HCT116 (cell line): ENCODE measurements at regions of chr7 and their contacts with region 1.

Region 1: GRCh38 chr7:88700725-88701124 is 58.8 kb upstream of the ZNF804B start:
- DNase-seq: no peak
- ATAC-seq: no peak
- H3K4me3 ChIP-seq: no peak overlapping the region
- H3K27ac ChIP-seq: no peak overlapping the region
- H3K4me1 ChIP-seq: no peaks in the 10 kb centered on the region
- H3K27me3 ChIP-seq: no peaks in the 10 kb centered on the region
- CTCF ChIP-seq: no peak
- POLR2A ChIP-seq: no peak
- RAD21 ChIP-seq: no peak

Region 2: DNA sequence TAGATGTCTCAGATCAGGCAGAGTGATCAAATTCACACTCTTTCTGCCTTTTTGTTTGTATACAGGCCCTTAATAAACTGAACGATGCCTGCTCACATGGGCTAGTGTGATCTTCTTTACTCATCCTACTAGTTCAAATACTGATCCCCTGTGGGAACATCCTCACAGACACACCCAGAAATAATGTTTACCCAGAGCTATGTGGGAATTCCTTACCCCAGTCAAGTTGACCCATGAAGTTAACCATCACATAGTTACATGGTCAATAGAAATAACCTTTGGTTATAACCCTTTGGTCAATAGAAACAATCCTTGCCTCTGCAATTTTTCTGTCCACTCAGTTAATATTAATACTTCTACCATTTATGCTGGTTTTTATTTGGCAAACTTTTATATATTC is 25.0 kb after region 1 on chr7:
- CTCF ChIA-PET with region 1: no interaction called
- POLR2A ChIA-PET with region 1: no interaction called
- RAD21 ChIA-PET with region 1: no interaction called
- intact Hi-C with region 1: loop called (anchors 1 kb)
- DNase-seq: no peak
- ATAC-seq: no peak
- H3K4me3 ChIP-seq: no peak overlapping the region
- H3K27ac ChIP-seq: no peak overlapping the region
- H3K4me1 ChIP-seq: no peaks in the 10 kb centered on the region
- H3K27me3 ChIP-seq: no peaks in the 10 kb centered on the region
- CTCF ChIP-seq: no peak
- POLR2A ChIP-seq: no peak
- RAD21 ChIP-seq: no peak

Region 3: DNA sequence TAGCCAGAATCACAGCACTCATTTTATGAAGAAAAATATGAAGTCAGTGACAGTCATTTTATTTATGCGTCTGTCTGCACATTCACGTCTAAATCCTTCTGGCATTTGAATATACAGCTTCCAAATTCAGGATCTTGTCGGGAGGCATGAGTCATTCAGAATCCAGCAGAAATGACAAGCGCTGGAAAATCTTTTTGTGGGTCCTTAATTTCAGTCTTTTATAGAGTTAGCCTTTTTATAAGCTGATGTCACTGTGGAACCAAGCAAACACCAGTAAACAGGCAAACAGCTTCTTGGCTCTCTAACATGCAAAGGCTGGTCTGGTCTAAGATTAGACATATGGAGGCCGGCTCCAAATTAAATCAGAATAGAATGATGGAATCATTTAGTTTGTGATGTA is 483.0 kb after region 1 on chr7:
- CTCF ChIA-PET with region 1: no interaction called
- POLR2A ChIA-PET with region 1: no interaction called
- RAD21 ChIA-PET with region 1: no interaction called
- intact Hi-C with region 1: no loop called
- DNase-seq: no peak
- ATAC-seq: no peak
- H3K4me3 ChIP-seq: no peak overlapping the region
- H3K27ac ChIP-seq: no peak overlapping the region
- H3K4me1 ChIP-seq: no peaks in the 10 kb centered on the region
- H3K27me3 ChIP-seq: no peaks in the 10 kb centered on the region
- CTCF ChIP-seq: no peak
- POLR2A ChIP-seq: no peak
- RAD21 ChIP-seq: no peak

Region 4: GRCh38 chr7:89377219-89377618 is 676.5 kb after region 1 on chr7:
- CTCF ChIA-PET with region 1: no interaction called
- POLR2A ChIA-PET with region 1: no interaction called
- RAD21 ChIA-PET with region 1: no interaction called
- intact Hi-C with region 1: no loop called
- DNase-seq: no peak
- ATAC-seq: no peak
- H3K4me3 ChIP-seq: no peak overlapping the region
- H3K27ac ChIP-seq: no peak overlapping the region
- H3K4me1 ChIP-seq: no peaks in the 10 kb centered on the region
- H3K27me3 ChIP-seq: no peaks in the 10 kb centered on the region
- CTCF ChIP-seq: no peak
- POLR2A ChIP-seq: no peak
- RAD21 ChIP-seq: no peak